Left cardiac atrium (tissue), 4 donors: ENCODE measurements at regions of chr15 and their contacts with region 1.

Region 1: DNA sequence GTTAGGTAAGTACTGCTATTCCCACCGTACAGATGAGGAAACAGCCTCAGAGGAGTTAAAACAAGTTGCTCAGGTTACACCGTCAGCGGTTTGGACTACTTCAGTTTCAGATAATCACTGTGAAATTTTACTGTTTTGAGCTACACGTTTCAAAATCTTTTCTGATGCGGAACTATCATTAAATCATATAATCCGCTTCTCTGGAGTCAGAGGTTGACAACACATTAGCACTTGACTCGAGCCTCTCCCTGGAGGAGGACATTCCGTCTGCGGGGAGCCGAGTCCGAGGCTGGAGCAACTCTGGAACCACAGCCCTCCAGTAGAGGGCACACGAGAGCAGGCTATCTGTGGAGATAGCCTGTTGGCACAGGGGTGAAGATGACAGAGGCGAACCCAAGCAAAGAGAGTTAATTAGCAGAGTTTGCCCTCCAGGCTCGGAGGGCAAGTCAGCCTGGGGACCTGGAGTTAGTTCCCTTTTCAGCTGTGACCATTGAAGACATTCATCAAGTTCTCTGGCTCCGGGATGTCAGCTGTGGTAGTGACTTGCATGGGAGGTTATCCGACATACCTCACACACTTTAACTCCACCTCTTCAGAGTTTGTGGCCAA is 131.2 kb downstream of the IGF1R start:
- DNase-seq: peak; percentile 87
- ATAC-seq: peak; percentile 84 to 94

Region 2: GRCh38 chr15:98647774-98648653 is 131.6 kb before region 1 on chr15 and contains the start of gene IGF1R:
- intact Hi-C with region 1: loop called (anchors 5 to 10 kb)
- DNase-seq: peak; percentile 87
- ATAC-seq: peak; percentile 81 to 82
- total RNA-seq, gene IGF1R: 27.3 to 56.2 TPM

Region 3: GRCh38 chr15:98658831-98659699 is 120.5 kb before region 1 on chr15:
- intact Hi-C with region 1: loop called (anchors 5 to 10 kb)
- DNase-seq: no peak
- ATAC-seq: peak; percentile 74 to 80

Region 4: DNA sequence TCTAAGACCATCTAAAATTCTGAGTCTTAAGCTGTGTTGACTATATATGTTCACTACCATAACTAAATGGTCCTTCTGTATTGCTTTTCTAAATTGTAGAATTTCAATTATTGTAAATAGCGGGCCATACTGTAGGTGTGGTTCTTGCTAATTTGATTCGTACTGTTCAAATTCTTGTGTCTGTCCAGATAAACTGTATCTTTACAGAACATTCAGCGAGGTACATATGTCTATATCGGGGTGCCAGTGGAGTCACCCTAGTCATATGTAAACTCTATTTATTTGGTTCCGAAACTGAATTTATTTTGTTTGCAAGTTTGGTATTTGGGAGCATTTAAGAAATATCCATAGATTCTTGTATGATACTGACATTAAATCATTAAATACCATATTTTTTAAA is 62.2 kb before region 1 on chr15:
- intact Hi-C with region 1: no loop called
- DNase-seq: no peak
- ATAC-seq: no peak

Region 5: GRCh38 chr15:98727115-98728085 is 52.2 kb before region 1 on chr15:
- intact Hi-C with region 1: loop called in 1 of 2 experiments (anchors 5 kb)
- DNase-seq: peak; percentile 92
- ATAC-seq: peak; percentile 95 to 98

Region 6: GRCh38 chr15:98745650-98746622 is 33.6 kb before region 1 on chr15:
- intact Hi-C with region 1: no loop called
- DNase-seq: no peak
- ATAC-seq: peak in 1 of 2 donors; percentile 64

Region 7: GRCh38 chr15:98842192-98842966 is 62.8 kb after region 1 on chr15:
- intact Hi-C with region 1: loop called in 1 of 2 experiments (anchors 2 kb)
- DNase-seq: no peak
- ATAC-seq: no peak

Region 8: GRCh38 chr15:99076552-99077308 is 297.2 kb after region 1 on chr15:
- intact Hi-C with region 1: loop called in 1 of 2 experiments (anchors 10 kb)
- DNase-seq: peak; percentile 69
- ATAC-seq: peak; percentile 78 to 92